ENCODE measurements at regions of chr12 and their contacts with region 1.

Region 1: DNA sequence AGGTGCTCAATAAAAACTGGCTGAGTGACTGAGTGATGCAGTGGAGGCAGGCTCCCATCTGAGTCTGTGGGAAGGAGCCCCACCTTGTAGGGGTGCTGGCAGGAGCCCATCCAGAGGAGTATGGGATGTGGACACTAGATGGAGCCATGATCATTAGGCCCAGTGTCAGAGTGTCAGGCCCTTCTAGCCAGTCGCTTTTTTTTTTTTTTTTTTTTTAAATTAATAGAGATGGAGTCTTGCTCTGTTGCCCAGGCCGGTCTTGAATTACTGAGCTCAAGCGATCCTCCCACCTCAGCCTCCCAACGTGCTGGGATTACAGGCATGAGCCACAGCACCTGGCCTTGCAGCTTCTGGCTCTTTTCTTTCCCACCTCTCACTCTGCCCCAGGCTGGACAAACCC is 11.5 kb downstream of the RITA1 start:
- DNase-seq: peak; percentile 63
- H3K4me3 ChIP-seq: no peak overlapping the region
- H3K27ac ChIP-seq: no peak overlapping the region
- H3K4me1 ChIP-seq: peaks cover 11% of the 10 kb centered on the region
- H3K27me3 ChIP-seq: no peaks in the 10 kb centered on the region
- CTCF ChIP-seq: peak; percentile 77 to 84

Region 2: GRCh38 chr12:113184900-113185773 is 11.9 kb before region 1 on chr12 and contains the starts of genes DDX54 and RITA1:
- CTCF ChIA-PET with region 1: interaction called, 12 read pairs
- dilution Hi-C with region 1: no loop called
- in situ Hi-C with region 1: no loop called
- intact Hi-C with region 1: no loop called
- DNase-seq: peak; percentile 89
- H3K4me3 ChIP-seq: peak within 1 kb of the TSS; percentile 74 to 94 (median 93)
- H3K27ac ChIP-seq: peak within 1 kb of the TSS; percentile 91
- H3K4me1 ChIP-seq: peaks cover 12% of the 10 kb centered on the region
- H3K27me3 ChIP-seq: no peaks in the 10 kb centered on the region
- CTCF ChIP-seq: no peak
- total RNA-seq, gene DDX54: 49.3 to 92.9 TPM
- total RNA-seq, gene RITA1: 21.0 to 21.5 TPM

Region 3: DNA sequence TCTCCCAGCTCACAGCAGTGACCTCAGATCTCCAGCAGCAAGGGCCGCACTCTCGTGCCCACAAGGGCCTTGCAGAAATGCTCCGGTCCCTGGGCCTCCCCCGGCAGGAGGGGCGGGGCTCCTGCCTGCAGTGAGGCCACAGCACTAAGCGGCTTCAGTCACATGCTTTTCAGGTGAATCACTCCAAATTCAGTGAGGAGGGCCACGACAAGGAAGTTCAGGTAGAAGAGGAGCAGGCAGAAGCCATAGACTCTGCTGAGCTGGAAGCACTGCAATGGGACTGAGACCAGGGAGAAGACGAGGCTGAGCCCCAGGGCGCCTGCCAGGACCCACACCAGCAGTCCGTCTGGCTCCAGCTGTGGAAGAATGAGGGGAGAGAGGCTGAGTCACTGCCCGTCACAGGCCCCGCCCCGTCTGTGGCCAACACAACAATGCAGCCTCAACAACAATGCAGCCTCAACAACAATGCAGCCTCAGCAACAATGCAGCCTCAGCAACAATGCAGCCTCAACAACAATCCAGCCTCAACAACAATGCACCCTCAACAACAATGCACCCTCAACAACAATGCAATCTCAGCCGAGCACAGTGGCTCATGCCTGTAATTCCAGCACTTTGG is 102.7 kb after region 1 on chr12:
- CTCF ChIA-PET with region 1: no interaction called
- dilution Hi-C with region 1: no loop called
- in situ Hi-C with region 1: no loop called
- intact Hi-C with region 1: loop called (anchors 2 kb)
- DNase-seq: peak; percentile 84
- H3K4me3 ChIP-seq: no peak overlapping the region
- H3K27ac ChIP-seq: peak overlapping the region; percentile 67
- H3K4me1 ChIP-seq: peaks cover 15% of the 10 kb centered on the region
- H3K27me3 ChIP-seq: no peaks in the 10 kb centered on the region
- CTCF ChIP-seq: no peak

Region 4: GRCh38 chr12:113358381-113359132 is 161.6 kb after region 1 on chr12 and contains the start of gene PLBD2:
- CTCF ChIA-PET with region 1: no interaction called
- dilution Hi-C with region 1: no loop called
- in situ Hi-C with region 1: no loop called
- intact Hi-C with region 1: loop called (anchors 5 kb)
- DNase-seq: peak; percentile 87
- H3K4me3 ChIP-seq: peak within 1 kb of the TSS; percentile 64 to 94 (median 72)
- H3K27ac ChIP-seq: peak within 1 kb of the TSS; percentile 18
- H3K4me1 ChIP-seq: peaks cover 10% of the 10 kb centered on the region
- H3K27me3 ChIP-seq: no peaks in the 10 kb centered on the region
- CTCF ChIP-seq: no peak
- total RNA-seq, gene PLBD2: 41.8 to 42.8 TPM